ENCODE measurements at regions of chr3 and their contacts with region 1.

Region 1: GRCh38 chr3:180802837-180803236 is 109.6 kb upstream of the FXR1 start:
- DNase-seq: no peak
- ATAC-seq: no peak
- H3K4me3 ChIP-seq: no peak overlapping the region
- H3K4me3 Mint-ChIP-seq: no peak overlapping the region
- H3K27ac ChIP-seq: no peak overlapping the region
- H3K27ac Mint-ChIP-seq: no peak overlapping the region
- H3K4me1 ChIP-seq: no peaks in the 10 kb centered on the region
- H3K4me1 Mint-ChIP-seq: no peaks in the 10 kb centered on the region
- H3K27me3 ChIP-seq: no peaks in the 10 kb centered on the region
- H3K27me3 Mint-ChIP-seq: peaks cover 0 to 21% (median 15%) of the 10 kb centered on the region in 5 donors

Region 2: DNA sequence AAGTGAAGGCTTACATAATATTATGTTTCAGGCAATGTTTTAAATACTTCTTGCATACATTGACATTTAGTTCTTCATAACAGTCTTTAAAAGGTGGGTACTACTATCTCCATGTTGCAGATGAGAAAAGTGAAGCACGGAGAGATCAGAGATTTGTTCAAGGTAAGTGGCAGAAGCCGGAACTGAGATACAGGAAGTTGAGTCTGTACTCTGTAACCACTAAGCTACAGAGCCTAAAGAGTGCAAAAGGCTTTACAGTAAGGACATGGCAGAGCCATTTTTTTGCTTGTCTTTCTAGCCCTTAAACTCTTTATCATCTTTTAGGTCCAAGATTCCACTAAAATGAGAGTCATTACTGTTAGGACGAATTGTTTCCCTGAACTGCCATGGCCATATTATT is 579.6 kb before region 1 on chr3:
- CTCF ChIA-PET with region 1: no interaction called
- POLR2A ChIA-PET with region 1: no interaction called
- intact Hi-C with region 1: no loop called
- DNase-seq: no peak
- ATAC-seq: no peak
- H3K4me3 ChIP-seq: no peak overlapping the region
- H3K4me3 Mint-ChIP-seq: no peak overlapping the region
- H3K27ac ChIP-seq: no peak overlapping the region
- H3K27ac Mint-ChIP-seq: no peak overlapping the region
- H3K4me1 ChIP-seq: no peaks in the 10 kb centered on the region
- H3K4me1 Mint-ChIP-seq: no peaks in the 10 kb centered on the region
- H3K27me3 ChIP-seq: no peaks in the 10 kb centered on the region
- H3K27me3 Mint-ChIP-seq: peaks cover 0 to 3% (median 0%) of the 10 kb centered on the region in 5 donors

Region 3: DNA sequence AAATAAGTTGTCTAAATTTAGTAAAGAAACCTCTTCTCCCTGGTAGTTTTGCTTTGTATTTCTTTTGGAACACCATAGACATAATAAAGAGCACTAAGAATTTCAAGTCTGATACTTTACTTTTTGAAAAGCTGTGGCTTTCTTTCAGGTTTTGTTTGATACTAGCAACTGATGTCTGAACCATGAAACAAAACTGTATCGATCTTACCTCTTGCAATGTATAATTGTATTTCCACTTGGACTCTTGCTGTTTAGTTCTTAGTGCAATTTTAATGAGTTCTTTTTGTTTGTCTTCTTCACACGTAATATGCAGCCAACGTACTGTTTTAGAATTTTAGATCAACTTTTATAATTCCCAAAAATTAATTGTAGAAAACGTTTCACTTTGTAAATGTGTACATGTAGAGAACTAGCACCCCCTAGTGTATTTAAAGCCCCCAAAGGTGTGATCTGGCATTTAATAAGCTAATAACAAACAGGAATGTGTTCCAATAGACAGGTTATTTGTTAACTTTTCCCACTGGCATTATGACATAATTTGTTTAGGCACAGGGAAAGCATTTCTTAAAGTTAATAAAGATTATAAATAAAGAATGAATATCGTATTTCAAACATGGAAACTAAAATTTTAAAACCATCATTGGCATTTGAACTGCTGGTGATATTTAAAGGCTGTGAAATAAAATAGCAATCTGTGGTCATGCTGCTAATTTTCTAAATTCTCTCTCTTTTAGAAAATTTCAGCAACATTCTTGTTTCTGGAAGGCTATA is 475.8 kb after region 1 on chr3:
- CTCF ChIA-PET with region 1: no interaction called
- POLR2A ChIA-PET with region 1: no interaction called
- intact Hi-C with region 1: loop called in 1 of 2 experiments (anchors 2 kb)
- DNase-seq: no peak
- ATAC-seq: no peak
- H3K4me3 ChIP-seq: no peak overlapping the region
- H3K4me3 Mint-ChIP-seq: no peak overlapping the region
- H3K27ac ChIP-seq: no peak overlapping the region
- H3K27ac Mint-ChIP-seq: no peak overlapping the region
- H3K4me1 ChIP-seq: no peaks in the 10 kb centered on the region
- H3K4me1 Mint-ChIP-seq: no peaks in the 10 kb centered on the region
- H3K27me3 ChIP-seq: no peaks in the 10 kb centered on the region
- H3K27me3 Mint-ChIP-seq: peaks cover 0 to 20% (median 8%) of the 10 kb centered on the region in 5 donors

Region 4: DNA sequence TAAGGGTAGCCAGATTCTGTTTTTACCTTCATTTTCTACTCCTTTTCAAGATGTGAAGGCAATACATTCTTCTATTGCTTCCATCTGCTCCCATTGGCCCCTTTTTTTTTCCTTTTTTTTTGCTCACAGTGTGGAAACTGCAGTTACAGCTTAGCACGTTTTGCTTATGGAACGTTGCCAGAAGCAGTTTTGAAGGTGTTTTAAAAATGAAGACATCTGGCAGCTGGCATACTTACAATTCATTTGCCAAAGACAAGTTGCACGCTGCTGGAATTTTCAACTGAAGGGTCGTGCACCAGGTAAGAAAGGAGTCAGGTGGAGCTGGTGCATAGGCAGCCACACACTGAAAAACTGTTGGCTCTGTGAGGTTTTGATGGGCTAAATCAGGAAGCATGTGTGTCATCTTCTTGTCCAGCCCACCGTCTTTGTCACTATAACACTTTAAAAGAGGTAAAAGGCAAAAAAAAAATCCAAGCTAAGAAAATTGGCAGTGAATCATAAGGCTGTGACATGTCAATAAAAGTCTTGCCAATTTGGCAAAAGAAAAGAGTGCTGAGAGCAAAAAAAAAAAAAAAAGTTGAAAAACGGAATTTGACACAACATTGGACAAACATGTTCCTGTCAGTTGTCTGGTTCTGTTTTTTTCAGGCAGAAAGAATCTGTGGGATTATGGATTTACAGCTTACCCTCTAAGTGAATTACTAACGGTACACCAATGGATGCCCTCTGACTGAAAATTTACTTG is 683.5 kb after region 1 on chr3:
- CTCF ChIA-PET with region 1: no interaction called
- POLR2A ChIA-PET with region 1: no interaction called
- intact Hi-C with region 1: no loop called
- DNase-seq: no peak
- ATAC-seq: no peak
- H3K4me3 ChIP-seq: no peak overlapping the region
- H3K4me3 Mint-ChIP-seq: no peak overlapping the region
- H3K27ac ChIP-seq: no peak overlapping the region
- H3K27ac Mint-ChIP-seq: no peak overlapping the region
- H3K4me1 ChIP-seq: no peaks in the 10 kb centered on the region
- H3K4me1 Mint-ChIP-seq: no peaks in the 10 kb centered on the region
- H3K27me3 ChIP-seq: no peaks in the 10 kb centered on the region
- H3K27me3 Mint-ChIP-seq: peaks cover 0 to 5% (median 0%) of the 10 kb centered on the region in 5 donors

Region 5: GRCh38 chr3:182490596-182491491 is 1688.0 kb after region 1 on chr3:
- CTCF ChIA-PET with region 1: no interaction called
- POLR2A ChIA-PET with region 1: no interaction called
- intact Hi-C with region 1: loop called in 1 of 2 experiments (anchors 10 kb)
- DNase-seq: no peak
- ATAC-seq: no peak
- H3K4me3 ChIP-seq: no peak overlapping the region
- H3K4me3 Mint-ChIP-seq: no peak overlapping the region
- H3K27ac ChIP-seq: no peak overlapping the region
- H3K27ac Mint-ChIP-seq: no peak overlapping the region
- H3K4me1 ChIP-seq: no peaks in the 10 kb centered on the region
- H3K4me1 Mint-ChIP-seq: no peaks in the 10 kb centered on the region
- H3K27me3 ChIP-seq: no peaks in the 10 kb centered on the region
- H3K27me3 Mint-ChIP-seq: peaks cover 0 to 5% (median 0%) of the 10 kb centered on the region in 5 donors

Measured in naive thymus-derived CD4-positive, alpha-beta T cell (primary cell).